PC-9 (cell line): ENCODE measurements at regions of chr16 and their contacts with region 1.

Region 1: GRCh38 chr16:4307215-4308037 is 8.4 kb upstream of the GLIS2 start:
- DNase-seq: peak; percentile 86 to 99
- H3K4me3 ChIP-seq: peak overlapping the region; percentile 87
- H3K27ac ChIP-seq: peak overlapping the region; percentile 26; the same call in 1 of the 2 replicates
- H3K4me1 ChIP-seq: peaks cover 26% of the 10 kb centered on the region
- H3K27me3 ChIP-seq: no peaks in the 10 kb centered on the region
- CTCF ChIP-seq: no peak

Region 2: DNA sequence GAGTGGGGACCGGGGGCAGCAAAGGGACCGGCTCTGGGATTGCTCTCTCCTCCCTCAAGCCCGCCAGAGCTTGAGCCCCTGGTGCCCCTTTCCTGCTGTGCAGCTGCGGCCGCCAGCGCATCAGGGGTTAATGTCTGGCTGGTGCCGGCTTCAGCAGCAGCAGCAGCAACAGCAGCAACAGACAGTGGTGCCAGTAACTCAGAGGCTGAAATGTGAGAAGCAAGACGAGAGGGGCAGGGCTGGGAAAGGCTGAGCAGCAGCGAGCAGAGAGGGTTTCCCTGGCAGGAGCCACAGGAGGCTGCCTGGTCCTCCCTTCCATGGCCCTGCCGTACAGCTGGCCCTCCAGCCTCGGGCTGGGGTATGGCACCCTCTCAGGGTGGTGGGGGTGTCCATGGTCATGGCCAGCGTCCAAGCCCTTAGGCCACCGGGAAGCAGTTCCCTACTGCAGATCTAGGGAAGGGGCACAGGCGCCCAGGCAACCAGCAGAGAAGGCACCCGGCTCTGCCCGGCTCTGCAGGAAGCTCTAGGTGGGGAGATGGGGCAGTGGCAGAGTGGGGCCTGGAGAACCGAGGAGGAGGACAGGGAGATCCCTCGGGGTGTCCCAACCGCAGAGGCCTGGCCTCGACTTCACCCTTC is 13.5 kb before region 1 on chr16:
- CTCF ChIA-PET with region 1: interaction called, 18 read pairs
- POLR2A ChIA-PET with region 1: interaction called, 24 read pairs
- intact Hi-C with region 1: loop called (anchors 1 kb)
- DNase-seq: peak; percentile 60 to 83
- H3K4me3 ChIP-seq: no peak overlapping the region
- H3K27ac ChIP-seq: 0 out of 2 replicates have a peak overlapping the region, but pooled peaks have one; percentile 2
- H3K4me1 ChIP-seq: peaks cover 55% of the 10 kb centered on the region
- H3K27me3 ChIP-seq: no peaks in the 10 kb centered on the region
- CTCF ChIP-seq: no peak

Region 3: GRCh38 chr16:4330277-4330874 is 22.9 kb after region 1 on chr16:
- CTCF ChIA-PET with region 1: interaction called, 5 read pairs
- POLR2A ChIA-PET with region 1: interaction called, 3 read pairs
- intact Hi-C with region 1: loop called (anchors 2 kb)
- DNase-seq: peak in 1 of 2 experiments; percentile 85
- H3K4me3 ChIP-seq: no peak overlapping the region
- H3K27ac ChIP-seq: no peak overlapping the region
- H3K4me1 ChIP-seq: no peaks in the 10 kb centered on the region
- H3K27me3 ChIP-seq: no peaks in the 10 kb centered on the region
- CTCF ChIP-seq: peak; percentile 96

Region 4: DNA sequence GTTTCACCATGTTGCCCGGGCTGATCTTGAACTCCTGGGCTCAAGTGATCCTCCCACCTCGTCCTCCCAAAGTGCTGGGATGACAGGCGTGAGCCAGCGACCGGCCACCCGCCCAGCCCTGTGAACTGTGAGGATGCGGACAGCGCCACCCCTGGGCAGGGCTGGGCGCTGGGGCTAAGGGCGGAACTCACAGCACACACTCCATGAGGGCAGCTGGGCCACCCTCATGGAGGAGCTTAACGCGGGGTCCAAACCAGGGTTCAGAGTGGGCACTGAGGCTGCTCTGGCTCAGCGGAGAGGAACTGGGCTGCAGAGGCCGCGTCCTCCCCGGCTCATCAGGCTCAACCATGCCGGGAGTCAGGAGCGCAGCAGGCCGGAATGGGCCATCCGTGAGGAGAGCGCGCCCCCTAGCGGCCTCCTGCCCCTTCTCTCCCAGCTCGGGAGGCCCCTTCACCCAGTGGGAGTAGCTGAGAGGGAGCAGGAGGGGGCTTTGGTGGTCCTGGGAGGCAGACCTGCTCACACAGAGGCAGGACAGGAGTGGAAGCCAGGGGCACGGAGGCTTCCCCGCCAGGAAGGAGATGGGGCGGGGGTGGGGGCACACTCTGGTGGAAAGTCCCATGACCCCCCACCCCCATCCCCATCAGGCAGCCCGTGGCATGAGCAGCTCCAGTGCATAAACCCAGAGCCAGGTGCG is 95.2 kb after region 1 on chr16:
- CTCF ChIA-PET with region 1: no interaction called
- POLR2A ChIA-PET with region 1: no interaction called
- intact Hi-C with region 1: no loop called
- DNase-seq: peak in 1 of 2 experiments; percentile 87
- H3K4me3 ChIP-seq: no peak overlapping the region
- H3K27ac ChIP-seq: no peak overlapping the region
- H3K4me1 ChIP-seq: peaks cover 4% of the 10 kb centered on the region; the same call in 1 of the 2 replicates
- H3K27me3 ChIP-seq: no peaks in the 10 kb centered on the region
- CTCF ChIP-seq: peak; percentile 93